AG04450 (cell line): ENCODE measurements at regions of chr22 and their contacts with region 1.

Region 1: GRCh38 chr22:22576244-22576988 is 17.4 kb upstream of the PRAME start:
- DNase-seq: no peak
- H3K4me3 ChIP-seq: no peak overlapping the region
- H3K27ac ChIP-seq: no peak overlapping the region
- H3K27me3 ChIP-seq: peaks cover 10% of the 10 kb centered on the region
- CTCF ChIP-seq: peak; percentile 82

Region 2: DNA sequence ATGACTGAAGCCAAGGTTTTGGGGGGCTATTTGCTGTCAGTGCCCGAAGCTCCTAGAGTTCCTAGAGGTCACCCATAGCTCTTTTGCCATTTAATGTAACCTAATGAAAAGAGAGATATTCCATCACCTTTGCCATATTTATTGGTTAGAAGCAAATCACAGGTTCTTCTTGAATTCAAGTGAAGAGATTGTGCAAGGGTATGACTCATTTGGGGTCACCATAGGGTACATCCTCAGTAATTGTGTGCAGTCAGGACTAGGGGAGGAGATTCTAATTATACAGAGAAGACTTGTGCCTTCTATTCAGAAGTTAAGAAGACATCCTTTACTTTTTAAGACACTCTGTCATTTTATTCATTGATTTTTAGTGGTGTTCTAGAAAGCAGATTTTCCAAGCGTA is 10.4 kb before region 1 on chr22:
- CTCF ChIA-PET with region 1: interaction called, 11 read pairs
- POLR2A ChIA-PET with region 1: no interaction called
- DNase-seq: no peak
- H3K4me3 ChIP-seq: no peak overlapping the region
- H3K27ac ChIP-seq: no peak overlapping the region
- H3K27me3 ChIP-seq: peaks cover 2% of the 10 kb centered on the region
- CTCF ChIP-seq: no peak

Region 3: GRCh38 chr22:22591348-22592299 is 15.2 kb after region 1 on chr22:
- CTCF ChIA-PET with region 1: interaction called, 53 read pairs
- POLR2A ChIA-PET with region 1: no interaction called
- DNase-seq: no peak
- H3K4me3 ChIP-seq: no peak overlapping the region
- H3K27ac ChIP-seq: no peak overlapping the region
- H3K27me3 ChIP-seq: peaks cover 5% of the 10 kb centered on the region
- CTCF ChIP-seq: no peak

Region 4: GRCh38 chr22:22745225-22746060 is 169.0 kb after region 1 on chr22:
- CTCF ChIA-PET with region 1: no interaction called
- POLR2A ChIA-PET with region 1: no interaction called
- DNase-seq: no peak
- H3K4me3 ChIP-seq: no peak overlapping the region
- H3K27ac ChIP-seq: no peak overlapping the region
- H3K27me3 ChIP-seq: peaks cover 7% of the 10 kb centered on the region
- CTCF ChIP-seq: peak; percentile 63